PC-3 (cell line): ENCODE measurements at regions of chr7 and their contacts with region 1.

Region 1: GRCh38 chr7:25951031-25951948 is 200.7 kb upstream of the NFE2L3 start:
- DNase-seq: peak; percentile 67
- ATAC-seq: peak; percentile 68
- H3K4me3 ChIP-seq: peak overlapping the region; percentile 67
- H3K27ac ChIP-seq: no peak overlapping the region
- H3K4me1 ChIP-seq: peaks cover 7% of the 10 kb centered on the region
- H3K27me3 ChIP-seq: peaks cover 69% of the 10 kb centered on the region
- CTCF ChIP-seq: no peak

Region 2: DNA sequence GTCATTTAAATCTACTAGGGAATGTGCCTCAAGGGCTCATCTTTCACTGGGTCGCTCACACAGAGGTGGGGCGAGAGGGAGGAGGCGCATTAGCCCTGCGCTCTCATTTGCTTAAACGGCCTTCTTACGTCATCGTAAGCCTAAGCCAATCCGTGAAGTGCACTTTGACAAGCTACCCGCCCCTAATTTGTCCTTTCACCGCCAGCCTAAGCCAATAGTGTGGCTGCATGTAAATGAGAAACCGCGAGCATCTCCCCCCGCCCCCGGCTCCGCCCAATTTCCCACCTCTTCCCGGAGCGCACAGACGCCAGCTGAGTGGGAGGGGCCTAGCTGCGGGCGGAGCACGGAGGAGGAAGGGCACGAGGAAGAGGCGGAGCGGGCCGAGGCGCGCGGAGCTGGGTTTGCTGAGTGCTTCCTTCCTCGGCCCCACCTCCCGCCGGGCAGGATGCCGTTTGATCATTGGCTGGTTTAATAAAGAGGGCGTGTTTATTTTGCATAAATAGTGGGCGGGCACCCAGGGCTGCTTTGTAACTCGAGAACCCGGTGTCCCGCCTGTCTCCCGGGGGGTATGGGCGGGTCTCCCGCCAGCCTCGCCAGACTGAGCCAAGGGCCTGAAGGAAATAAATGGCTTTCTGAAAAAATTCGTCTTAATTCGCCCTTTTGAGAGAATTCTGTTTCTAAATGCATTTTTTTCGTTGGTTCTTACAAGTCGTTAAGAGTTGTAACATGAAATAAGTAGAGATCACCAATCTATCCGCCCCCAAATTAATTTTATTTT is 88.8 kb before region 1 on chr7:
- CTCF ChIA-PET with region 1: no interaction called
- POLR2A ChIA-PET with region 1: no interaction called
- intact Hi-C with region 1: loop called (anchors 5 kb)
- DNase-seq: peak; percentile 98
- ATAC-seq: peak; percentile 90
- H3K4me3 ChIP-seq: peak overlapping the region; percentile 63; the same call in 1 of the 2 replicates
- H3K27ac ChIP-seq: no peak overlapping the region
- H3K4me1 ChIP-seq: peaks cover 5% of the 10 kb centered on the region; the same call in 1 of the 2 replicates
- H3K27me3 ChIP-seq: peaks cover 36% of the 10 kb centered on the region
- CTCF ChIP-seq: no peak